ENCODE measurements at regions of chr2 and their contacts with region 1.

Region 1: GRCh38 chr2:236352761-236353593 is 88.8 kb upstream of the ASB18 start:
- DNase-seq: no peak
- H3K4me3 ChIP-seq: no peak overlapping the region
- H3K27ac ChIP-seq: no peak overlapping the region
- H3K4me1 ChIP-seq: no peaks in the 10 kb centered on the region
- H3K27me3 ChIP-seq: no peaks in the 10 kb centered on the region
- CTCF ChIP-seq: peak; percentile 39 to 88 (median 80)
- POLR2A ChIP-seq: no peak

Region 2: DNA sequence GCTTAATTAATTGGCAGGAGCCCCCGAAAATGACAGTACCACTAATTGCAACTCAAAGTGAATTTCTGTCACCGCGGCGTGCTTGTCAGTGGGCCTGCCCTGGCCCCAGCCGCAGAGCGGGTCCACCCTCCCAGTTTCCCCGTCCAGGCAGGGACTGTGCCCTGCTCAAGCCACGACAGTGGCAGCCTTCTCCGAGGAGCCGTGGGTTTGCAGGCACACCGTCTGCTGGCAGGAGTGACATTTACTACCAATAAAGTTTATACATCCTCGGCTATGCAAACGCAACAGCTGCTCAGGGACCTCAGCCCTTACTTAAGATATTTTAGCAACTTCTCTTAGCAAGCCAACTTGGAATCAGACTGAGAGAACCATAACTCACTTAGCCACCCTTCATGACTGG is 297.5 kb before region 1 on chr2:
- intact Hi-C with region 1: no loop called
- DNase-seq: no peak
- H3K4me3 ChIP-seq: no peak overlapping the region
- H3K27ac ChIP-seq: no peak overlapping the region
- H3K4me1 ChIP-seq: no peaks in the 10 kb centered on the region
- H3K27me3 ChIP-seq: no peaks in the 10 kb centered on the region
- CTCF ChIP-seq: no peak
- POLR2A ChIP-seq: no peak

Region 3: DNA sequence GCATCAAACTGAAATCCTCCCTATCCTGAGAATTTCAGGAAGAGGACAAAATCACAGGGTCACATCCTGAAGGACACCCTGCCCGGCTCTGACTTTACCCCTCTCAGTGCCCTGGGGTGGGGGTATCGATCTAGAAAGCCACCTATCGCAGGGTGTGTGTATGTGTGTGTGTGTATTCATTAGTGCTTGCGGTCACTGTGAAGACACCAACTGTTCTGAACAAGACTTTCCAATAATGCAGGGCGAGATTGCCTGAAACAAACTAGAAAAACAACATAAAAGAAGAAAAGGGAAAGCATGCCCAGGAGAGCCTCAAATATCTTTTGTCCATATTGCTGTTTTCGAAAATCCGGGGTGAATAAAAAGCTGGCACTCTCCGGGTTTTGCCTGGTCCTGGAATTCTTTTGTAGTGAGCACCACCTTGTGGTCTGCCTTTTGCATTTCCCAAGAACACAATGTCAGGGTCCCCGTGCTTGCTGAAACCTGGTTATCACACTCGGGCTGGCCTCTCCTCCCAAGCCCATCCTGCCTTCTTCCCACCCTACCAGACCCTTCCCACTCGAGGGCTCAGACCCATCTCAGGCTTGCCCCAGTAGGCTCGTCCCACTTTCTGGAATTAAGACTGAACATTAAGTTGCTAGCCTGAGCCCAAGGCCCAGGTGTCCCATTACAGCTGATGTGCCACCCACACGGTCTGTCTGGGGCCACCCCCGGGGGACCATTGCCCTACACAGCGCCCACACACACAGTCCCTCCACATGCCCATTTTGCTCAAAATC is 707.7 kb after region 1 on chr2:
- intact Hi-C with region 1: loop called (anchors 5 kb)
- DNase-seq: no peak
- H3K4me3 ChIP-seq: no peak overlapping the region
- H3K27ac ChIP-seq: no peak overlapping the region
- H3K4me1 ChIP-seq: peaks cover 0 to 20% (median 0%) of the 10 kb centered on the region in 3 donors
- H3K27me3 ChIP-seq: no peaks in the 10 kb centered on the region
- CTCF ChIP-seq: peak; percentile 41 to 78 (median 55)
- POLR2A ChIP-seq: no peak